Prostate gland (tissue), 2 donors: ENCODE measurements at regions of chr13 and their contacts with region 1.

Region 1: DNA sequence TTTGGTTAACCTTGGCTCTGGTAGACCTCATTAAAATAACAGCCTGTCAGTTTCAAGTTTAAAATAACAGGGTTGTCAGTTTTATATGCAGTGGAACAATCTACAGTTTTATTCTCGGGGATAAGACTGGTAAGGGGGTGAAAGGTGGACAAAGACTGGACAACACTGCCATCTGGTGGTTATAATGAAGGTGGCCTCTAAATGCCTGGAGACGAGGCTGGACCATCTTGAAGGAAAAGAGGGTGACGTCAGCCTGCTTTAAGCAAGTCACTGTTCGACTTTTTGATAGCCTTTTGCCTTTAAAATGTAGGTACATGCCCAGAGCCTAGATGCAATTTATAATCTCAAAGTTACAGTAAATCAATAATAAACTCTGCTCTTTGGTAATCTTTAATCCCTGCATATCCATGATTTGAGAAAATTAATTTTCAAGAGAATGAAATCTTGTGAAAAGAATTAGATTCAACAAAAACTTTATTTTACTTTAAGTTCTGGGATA is 117.0 kb downstream of the DCT start:
- DNase-seq: peak; percentile 62
- H3K4me3 ChIP-seq: no peak overlapping the region
- H3K27ac ChIP-seq: no peak overlapping the region
- H3K4me1 ChIP-seq: no peaks in the 10 kb centered on the region
- H3K27me3 ChIP-seq: no peaks in the 10 kb centered on the region
- CTCF ChIP-seq: peak; percentile 72 to 91 (median 86)
- POLR2A ChIP-seq: no peak

Region 2: GRCh38 chr13:93227878-93228642 is 1134.4 kb before region 1 on chr13:
- intact Hi-C with region 1: loop called (anchors 10 kb)
- DNase-seq: peak; percentile 34
- H3K4me3 ChIP-seq: peak overlapping the region; percentile 38 to 40
- H3K27ac ChIP-seq: peak overlapping the region; percentile 73 to 76
- H3K4me1 ChIP-seq: no peaks in the 10 kb centered on the region
- H3K27me3 ChIP-seq: no peaks in the 10 kb centered on the region
- CTCF ChIP-seq: peak in 1 of 4 experiments; percentile 11
- POLR2A ChIP-seq: no peak

Region 3: GRCh38 chr13:94162289-94162688 is 200.2 kb before region 1 on chr13:
- intact Hi-C with region 1: no loop called
- DNase-seq: no peak
- H3K4me3 ChIP-seq: no peak overlapping the region
- H3K27ac ChIP-seq: no peak overlapping the region
- H3K4me1 ChIP-seq: no peaks in the 10 kb centered on the region
- H3K27me3 ChIP-seq: no peaks in the 10 kb centered on the region
- CTCF ChIP-seq: no peak
- POLR2A ChIP-seq: no peak